B cell (primary cell): ENCODE measurements at regions of chr11 and their contacts with region 1.

Region 1: GRCh38 chr11:84564180-84564866 is 1062.8 kb downstream of the DLG2 start:
- DNase-seq: peak; percentile 59
- ATAC-seq: peak; percentile 45
- H3K4me3 ChIP-seq: no peak overlapping the region
- H3K4me3 Mint-ChIP-seq: no peak overlapping the region
- H3K27ac ChIP-seq: no peak overlapping the region
- H3K27ac Mint-ChIP-seq: no peak overlapping the region
- H3K4me1 ChIP-seq: no peaks in the 10 kb centered on the region
- H3K4me1 Mint-ChIP-seq: no peaks in the 10 kb centered on the region
- H3K27me3 ChIP-seq: no peaks in the 10 kb centered on the region
- H3K27me3 Mint-ChIP-seq: peaks cover 6% of the 10 kb centered on the region
- CTCF ChIP-seq: peak; percentile 97

Region 2: GRCh38 chr11:83827940-83828554 is 736.3 kb before region 1 on chr11:
- CTCF ChIA-PET with region 1: no interaction called
- POLR2A ChIA-PET with region 1: no interaction called
- intact Hi-C with region 1: loop called (anchors 2 kb)
- DNase-seq: peak; percentile 46
- ATAC-seq: no peak
- H3K4me3 ChIP-seq: no peak overlapping the region
- H3K4me3 Mint-ChIP-seq: no peak overlapping the region
- H3K27ac ChIP-seq: no peak overlapping the region
- H3K27ac Mint-ChIP-seq: no peak overlapping the region
- H3K4me1 ChIP-seq: no peaks in the 10 kb centered on the region
- H3K4me1 Mint-ChIP-seq: no peaks in the 10 kb centered on the region
- H3K27me3 ChIP-seq: no peaks in the 10 kb centered on the region
- H3K27me3 Mint-ChIP-seq: peaks cover 5% of the 10 kb centered on the region
- CTCF ChIP-seq: peak; percentile 79

Region 3: GRCh38 chr11:84930863-84931262 is 366.5 kb after region 1 on chr11:
- CTCF ChIA-PET with region 1: no interaction called
- POLR2A ChIA-PET with region 1: no interaction called
- intact Hi-C with region 1: no loop called
- DNase-seq: no peak
- ATAC-seq: no peak
- H3K4me3 ChIP-seq: no peak overlapping the region
- H3K4me3 Mint-ChIP-seq: peak overlapping the region; percentile 24
- H3K27ac ChIP-seq: no peak overlapping the region
- H3K27ac Mint-ChIP-seq: peak overlapping the region; percentile 4
- H3K4me1 ChIP-seq: no peaks in the 10 kb centered on the region
- H3K4me1 Mint-ChIP-seq: peaks cover 15% of the 10 kb centered on the region
- H3K27me3 ChIP-seq: no peaks in the 10 kb centered on the region
- H3K27me3 Mint-ChIP-seq: no peaks in the 10 kb centered on the region
- CTCF ChIP-seq: no peak